ENCODE measurements at regions of chr5 and their contacts with region 1.

Region 1: DNA sequence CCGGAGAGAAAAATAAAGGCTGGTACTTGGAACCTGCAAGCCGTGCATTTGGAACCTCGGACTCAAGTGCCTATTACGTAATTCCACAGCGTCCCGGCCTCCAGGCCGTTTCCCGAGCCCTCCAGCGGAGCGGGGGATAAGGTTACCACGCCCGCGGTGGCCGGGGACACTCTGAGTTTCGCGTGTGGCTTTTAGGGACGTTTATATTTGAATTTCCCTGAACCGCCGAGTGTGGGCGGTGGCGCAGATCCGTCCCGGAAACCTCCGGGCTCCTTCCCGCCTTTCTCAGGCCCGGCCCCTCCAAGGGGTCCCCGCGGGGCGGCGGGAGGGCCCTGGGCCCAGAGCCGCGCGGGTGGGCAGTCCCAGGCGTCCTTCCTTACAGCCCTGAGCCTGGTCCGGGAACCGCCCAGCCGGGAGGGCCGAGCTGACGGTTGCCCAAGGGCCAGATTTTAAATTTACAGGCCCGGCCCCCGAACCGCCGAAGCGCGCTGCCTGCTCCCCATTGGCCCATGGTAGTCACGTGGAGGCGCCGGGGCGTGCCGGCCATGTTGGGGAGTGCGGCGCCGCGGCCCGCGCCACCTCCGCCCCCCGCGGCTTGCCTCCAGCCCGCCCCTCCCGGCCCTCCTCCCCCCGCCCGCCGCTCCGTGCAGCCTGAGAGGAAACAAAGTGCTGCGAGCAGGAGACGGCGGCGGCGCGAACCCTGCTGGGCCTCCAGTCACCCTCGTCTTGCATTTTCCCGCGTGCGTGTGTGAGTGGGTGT is at the start of gene LMNB1:
- DNase-seq: peak; percentile 95
- H3K4me3 Mint-ChIP-seq: peak within 1 kb of the TSS; percentile 95
- H3K27ac Mint-ChIP-seq: peak within 1 kb of the TSS; percentile 99
- H3K4me1 Mint-ChIP-seq: peaks cover 36% of the 10 kb centered on the region
- H3K27me3 Mint-ChIP-seq: no peaks in the 10 kb centered on the region
- total RNA-seq, gene LMNB1: 326 to 337 TPM

Region 2: DNA sequence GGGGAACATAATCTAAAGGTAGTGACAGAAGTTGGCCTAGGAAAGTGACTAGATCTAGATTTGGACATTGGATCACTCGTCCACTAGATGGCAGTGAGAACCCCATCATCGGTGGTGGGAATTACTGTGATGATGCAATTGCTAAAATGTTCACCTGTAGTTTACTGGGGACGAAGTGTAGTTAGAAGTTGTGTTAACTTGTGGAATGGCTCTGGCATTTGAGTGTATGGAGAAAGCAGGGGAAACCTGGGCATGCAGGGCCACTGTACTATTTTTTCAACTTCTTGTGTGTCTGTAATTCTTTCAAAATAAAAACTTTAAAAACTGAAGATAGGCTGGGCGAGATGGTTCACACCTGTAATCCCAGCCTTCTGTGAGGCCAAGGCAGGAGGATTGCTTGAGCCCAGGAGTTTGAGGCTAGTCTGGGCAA is 100.5 kb before region 1 on chr5:
- CTCF ChIA-PET with region 1: interaction called, 107 read pairs
- POLR2A ChIA-PET with region 1: interaction called, 10 read pairs
- DNase-seq: peak; percentile 82
- H3K4me3 Mint-ChIP-seq: no peak overlapping the region
- H3K27ac Mint-ChIP-seq: peak overlapping the region; percentile 11
- H3K4me1 Mint-ChIP-seq: peaks cover 22% of the 10 kb centered on the region
- H3K27me3 Mint-ChIP-seq: no peaks in the 10 kb centered on the region

Region 3: GRCh38 chr5:126686451-126687126 is 90.1 kb before region 1 on chr5:
- CTCF ChIA-PET with region 1: interaction called, 107 read pairs
- POLR2A ChIA-PET with region 1: interaction called, 3 read pairs
- DNase-seq: no peak
- H3K4me3 Mint-ChIP-seq: no peak overlapping the region
- H3K27ac Mint-ChIP-seq: no peak overlapping the region
- H3K4me1 Mint-ChIP-seq: peaks cover 18% of the 10 kb centered on the region
- H3K27me3 Mint-ChIP-seq: no peaks in the 10 kb centered on the region

Region 4: GRCh38 chr5:126736141-126736540 is 40.5 kb before region 1 on chr5:
- CTCF ChIA-PET with region 1: interaction called, 6 read pairs
- POLR2A ChIA-PET with region 1: interaction called, 10 read pairs
- DNase-seq: no peak
- H3K4me3 Mint-ChIP-seq: no peak overlapping the region
- H3K27ac Mint-ChIP-seq: no peak overlapping the region
- H3K4me1 Mint-ChIP-seq: peaks cover 4% of the 10 kb centered on the region
- H3K27me3 Mint-ChIP-seq: peaks cover 2% of the 10 kb centered on the region

Region 5: GRCh38 chr5:126745259-126745992 is 31.3 kb before region 1 on chr5:
- CTCF ChIA-PET with region 1: interaction called, 5 read pairs
- POLR2A ChIA-PET with region 1: interaction called, 12 read pairs
- DNase-seq: no peak
- H3K4me3 Mint-ChIP-seq: no peak overlapping the region
- H3K27ac Mint-ChIP-seq: no peak overlapping the region
- H3K4me1 Mint-ChIP-seq: peaks cover 34% of the 10 kb centered on the region
- H3K27me3 Mint-ChIP-seq: no peaks in the 10 kb centered on the region

Region 6: DNA sequence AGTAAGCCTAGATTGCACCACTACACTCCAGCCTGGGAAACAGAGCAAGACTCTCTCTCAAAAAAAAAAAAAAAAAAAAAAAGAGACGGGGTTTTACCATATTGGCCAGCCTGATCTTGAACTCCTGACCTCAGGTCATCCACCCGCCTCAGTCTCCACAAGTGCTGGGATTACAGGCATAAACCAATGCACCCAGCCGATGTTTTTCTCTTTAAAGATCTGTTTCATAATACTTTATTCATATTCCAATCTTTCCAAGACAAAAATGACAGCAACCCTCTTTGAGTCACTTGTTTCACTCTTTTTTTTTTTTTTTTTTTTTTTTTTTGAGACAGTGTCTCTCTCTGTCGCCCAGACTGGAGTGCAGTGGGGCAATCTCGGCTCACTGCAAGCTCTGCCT is 13.3 kb before region 1 on chr5:
- CTCF ChIA-PET with region 1: interaction called, 58 read pairs
- POLR2A ChIA-PET with region 1: interaction called, 5 read pairs
- DNase-seq: no peak
- H3K4me3 Mint-ChIP-seq: no peak overlapping the region
- H3K27ac Mint-ChIP-seq: peak overlapping the region; percentile 64
- H3K4me1 Mint-ChIP-seq: peaks cover 43% of the 10 kb centered on the region
- H3K27me3 Mint-ChIP-seq: no peaks in the 10 kb centered on the region

Region 7: DNA sequence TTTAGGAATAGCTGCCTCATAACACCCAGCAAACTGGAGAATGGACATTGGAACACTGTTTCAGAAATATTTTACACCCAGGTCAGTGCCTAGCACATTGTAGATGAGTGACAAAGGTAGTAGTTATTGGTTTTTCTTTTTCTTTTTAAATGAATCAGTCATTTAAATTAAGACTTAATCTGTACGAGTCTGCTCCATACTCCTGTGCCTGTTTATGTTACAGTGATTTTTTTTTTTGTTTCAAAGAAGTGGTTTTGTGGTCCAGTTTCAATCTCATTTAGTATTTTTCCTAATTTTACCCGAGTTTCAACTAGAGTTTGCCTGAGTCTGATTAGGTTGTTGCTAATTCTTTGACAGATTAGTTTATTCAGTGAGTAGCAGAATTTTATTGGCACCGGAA is 16.4 kb after region 1 on chr5:
- CTCF ChIA-PET with region 1: interaction called, 14 read pairs
- POLR2A ChIA-PET with region 1: interaction called, 6 read pairs
- DNase-seq: no peak
- H3K4me3 Mint-ChIP-seq: no peak overlapping the region
- H3K27ac Mint-ChIP-seq: peak overlapping the region; percentile 81
- H3K4me1 Mint-ChIP-seq: peaks cover 64% of the 10 kb centered on the region
- H3K27me3 Mint-ChIP-seq: no peaks in the 10 kb centered on the region